CD8-positive, alpha-beta memory T cell (primary cell): ENCODE measurements at regions of chr12 and their contacts with region 1.

Region 1: GRCh38 chr12:53079226-53080117 is at the start of gene SPRYD3:
- DNase-seq: peak; percentile 95 to 98 (median 96)
- H3K4me3 ChIP-seq: peak within 1 kb of the TSS; percentile 87
- H3K4me3 Mint-ChIP-seq: peak within 1 kb of the TSS; percentile 85 to 95 (median 91)
- H3K27ac ChIP-seq: peak within 1 kb of the TSS; percentile 84
- H3K27ac Mint-ChIP-seq: peak within 1 kb of the TSS; percentile 83 to 98 (median 93)
- H3K4me1 ChIP-seq: peaks cover 21% of the 10 kb centered on the region
- H3K4me1 Mint-ChIP-seq: peaks cover 38 to 61% (median 50%) of the 10 kb centered on the region in 3 donors
- H3K27me3 ChIP-seq: no peaks in the 10 kb centered on the region
- H3K27me3 Mint-ChIP-seq: peaks cover 0 to 1% of the 10 kb centered on the region in 2 donors
- total RNA-seq, gene SPRYD3: 40.1 to 43.3 TPM

Region 2: GRCh38 chr12:53054112-53054833 is 25.2 kb before region 1 on chr12:
- CTCF ChIA-PET with region 1: interaction called, 8 read pairs
- POLR2A ChIA-PET with region 1: interaction called, 11 read pairs
- DNase-seq: peak; percentile 91 to 96 (median 92)
- H3K4me3 ChIP-seq: peak overlapping the region; percentile 86
- H3K4me3 Mint-ChIP-seq: peak overlapping the region; percentile 89 to 96 (median 93)
- H3K27ac ChIP-seq: peak overlapping the region; percentile 55
- H3K27ac Mint-ChIP-seq: peak overlapping the region; percentile 84 to 98 (median 92)
- H3K4me1 ChIP-seq: peaks cover 7% of the 10 kb centered on the region
- H3K4me1 Mint-ChIP-seq: peaks cover 10 to 15% (median 12%) of the 10 kb centered on the region in 3 donors
- H3K27me3 ChIP-seq: no peaks in the 10 kb centered on the region
- H3K27me3 Mint-ChIP-seq: no peaks in the 10 kb centered on the region

Region 3: DNA sequence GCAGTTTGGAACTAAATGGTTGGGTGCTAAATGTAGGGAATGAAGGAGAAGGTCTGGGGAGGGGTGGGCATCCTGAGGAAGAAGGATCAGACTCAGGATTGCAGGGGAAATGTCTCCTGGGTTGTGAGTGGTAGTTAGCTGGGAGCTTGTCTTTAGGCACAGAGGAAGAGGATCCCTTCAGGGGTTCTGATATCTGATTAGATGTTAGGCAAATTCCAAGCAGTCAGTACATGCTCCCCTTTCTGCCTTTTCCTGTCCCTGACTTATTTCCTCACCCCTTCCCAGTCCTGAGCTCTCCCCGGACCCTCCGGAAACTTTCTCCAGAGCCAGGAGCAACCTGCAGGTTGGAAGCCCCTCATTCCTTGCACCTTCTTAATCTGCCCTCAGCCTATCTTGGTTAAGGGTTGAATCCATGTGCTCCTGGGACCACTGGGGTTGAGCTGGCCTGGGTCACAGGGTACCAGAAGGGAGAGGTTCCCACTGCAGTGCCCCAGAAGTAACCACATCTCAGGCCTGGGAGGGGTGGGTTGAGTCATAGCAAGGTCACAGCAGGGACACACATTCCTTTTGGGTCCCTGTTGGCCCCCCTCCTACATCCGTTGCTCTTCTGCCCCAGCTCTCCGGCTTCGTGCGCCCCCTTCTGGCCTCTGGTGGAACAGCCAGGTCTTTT is 19.6 kb after region 1 on chr12:
- CTCF ChIA-PET with region 1: interaction called, 30 read pairs
- POLR2A ChIA-PET with region 1: interaction called, 18 read pairs
- DNase-seq: peak; percentile 79 to 92 (median 85)
- H3K4me3 ChIP-seq: no peak overlapping the region
- H3K4me3 Mint-ChIP-seq: peak overlapping the region; percentile 51 to 82 (median 77)
- H3K27ac ChIP-seq: no peak overlapping the region
- H3K27ac Mint-ChIP-seq: peak overlapping the region; percentile 24 to 95 (median 83)
- H3K4me1 ChIP-seq: peaks cover 48% of the 10 kb centered on the region
- H3K4me1 Mint-ChIP-seq: peaks cover 42 to 65% (median 53%) of the 10 kb centered on the region in 3 donors
- H3K27me3 ChIP-seq: no peaks in the 10 kb centered on the region
- H3K27me3 Mint-ChIP-seq: peaks cover 0 to 3% of the 10 kb centered on the region in 2 donors

Region 4: GRCh38 chr12:53113136-53113705 is 33.7 kb after region 1 on chr12:
- CTCF ChIA-PET with region 1: no interaction called
- POLR2A ChIA-PET with region 1: no interaction called
- DNase-seq: no peak
- H3K4me3 ChIP-seq: no peak overlapping the region
- H3K4me3 Mint-ChIP-seq: no peak overlapping the region
- H3K27ac ChIP-seq: no peak overlapping the region
- H3K27ac Mint-ChIP-seq: peak overlapping the region in 1 of 8 donors; percentile 57
- H3K4me1 ChIP-seq: no peaks in the 10 kb centered on the region
- H3K4me1 Mint-ChIP-seq: no peaks in the 10 kb centered on the region
- H3K27me3 ChIP-seq: no peaks in the 10 kb centered on the region
- H3K27me3 Mint-ChIP-seq: no peaks in the 10 kb centered on the region